ENCODE measurements at regions of chr1 and their contacts with region 1.

Region 1: DNA sequence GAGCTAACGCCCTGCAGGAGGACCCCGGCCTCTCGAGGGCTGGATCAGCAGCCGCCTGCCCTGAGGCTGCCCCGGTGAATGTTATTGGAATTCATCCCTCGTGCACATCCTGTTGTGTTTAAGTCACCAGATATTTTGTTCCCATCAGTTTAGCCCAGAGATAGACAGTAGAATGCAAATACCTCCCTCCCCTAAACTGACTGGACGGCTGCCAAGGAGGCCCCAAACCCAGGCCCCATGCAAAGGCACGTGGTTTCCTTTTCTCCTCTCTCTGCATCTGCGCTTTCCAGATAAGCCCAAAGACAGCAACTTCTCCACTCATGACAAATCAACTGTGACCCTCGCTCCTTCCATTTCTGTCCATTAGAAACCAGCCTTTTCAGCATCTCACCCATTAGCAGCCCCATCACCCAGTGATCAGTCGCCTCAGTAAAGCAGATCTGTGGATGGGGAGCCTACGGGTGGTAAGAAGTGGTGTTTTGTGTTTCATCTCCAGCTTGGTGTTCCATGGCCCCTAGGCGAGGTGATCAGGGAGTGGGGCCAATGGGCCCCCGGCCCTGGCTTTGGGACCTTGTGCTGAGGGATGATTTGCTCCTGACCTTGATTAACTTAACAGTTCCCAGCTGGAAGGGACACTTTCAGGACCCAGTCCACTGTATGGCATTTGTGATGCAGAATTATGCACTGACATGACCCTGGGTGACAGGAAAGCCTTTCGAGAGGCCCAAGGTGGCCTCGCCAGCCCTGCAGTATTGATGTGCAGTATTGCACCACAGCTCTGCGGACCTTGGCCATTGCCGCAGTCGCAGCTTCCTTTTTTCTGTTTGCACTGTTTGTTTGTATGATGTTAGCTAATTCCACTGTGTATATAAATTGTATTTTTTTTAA is 5.2 kb downstream of the NPPA start:
- DNase-seq: no peak
- H3K4me3 ChIP-seq: no peak overlapping the region
- H3K4me1 ChIP-seq: no peaks in the 10 kb centered on the region
- H3K27me3 ChIP-seq: no peaks in the 10 kb centered on the region

Region 2: DNA sequence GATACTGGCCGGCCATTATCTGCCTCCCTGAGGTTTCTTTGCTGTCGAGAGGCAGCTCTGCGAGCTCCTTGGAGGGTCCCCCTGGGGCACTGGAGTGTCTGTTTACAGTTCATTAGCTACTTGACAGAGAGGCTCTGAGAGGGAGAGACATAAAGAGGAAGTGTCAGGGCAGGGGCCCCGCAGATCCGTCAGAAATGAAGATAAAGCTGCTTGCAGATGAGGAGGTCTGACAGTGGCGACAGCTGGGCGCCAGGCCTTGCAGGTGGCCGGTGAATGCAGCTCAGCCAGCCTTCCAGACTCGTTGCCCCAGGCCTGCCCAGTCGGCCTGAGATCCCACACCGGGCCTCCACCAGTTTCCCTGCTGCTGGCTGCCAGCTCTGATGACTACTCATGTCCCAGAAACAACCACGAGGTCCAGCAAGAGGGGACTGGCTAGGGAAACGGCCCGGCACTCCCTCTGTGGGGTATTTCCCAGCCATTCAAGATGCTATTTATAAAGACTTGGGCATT is 278.8 kb before region 1 on chr1:
- in situ Hi-C with region 1: no loop called
- DNase-seq: no peak
- H3K4me3 ChIP-seq: no peak overlapping the region
- H3K4me1 ChIP-seq: no peaks in the 10 kb centered on the region
- H3K27me3 ChIP-seq: peaks cover 14% of the 10 kb centered on the region

Region 3: GRCh38 chr1:11761988-11762406 is 80.4 kb before region 1 on chr1 and contains the start of gene C1orf167:
- in situ Hi-C with region 1: no loop called
- DNase-seq: peak in 1 of 2 experiments; percentile 74
- H3K4me3 ChIP-seq: 0 out of 2 replicates have a peak within 1 kb of the TSS, but pooled peaks have one; percentile 5
- H3K4me1 ChIP-seq: peaks cover 8% of the 10 kb centered on the region; the same call in 1 of the 2 replicates
- H3K27me3 ChIP-seq: 0 out of 2 replicates have a peak, but pooled peaks cover 3% of the 10 kb centered on the region

Region 4: GRCh38 chr1:11898831-11899467 is 56.6 kb after region 1 on chr1:
- in situ Hi-C with region 1: loop called (anchors 5 kb)
- DNase-seq: peak in 1 of 2 experiments; percentile 59
- H3K4me3 ChIP-seq: no peak overlapping the region
- H3K4me1 ChIP-seq: no peaks in the 10 kb centered on the region
- H3K27me3 ChIP-seq: peaks cover 40% of the 10 kb centered on the region

Measured in HAP-1 (cell line).